ENCODE measurements at regions of chr6 and their contacts with region 1.

Region 1: DNA sequence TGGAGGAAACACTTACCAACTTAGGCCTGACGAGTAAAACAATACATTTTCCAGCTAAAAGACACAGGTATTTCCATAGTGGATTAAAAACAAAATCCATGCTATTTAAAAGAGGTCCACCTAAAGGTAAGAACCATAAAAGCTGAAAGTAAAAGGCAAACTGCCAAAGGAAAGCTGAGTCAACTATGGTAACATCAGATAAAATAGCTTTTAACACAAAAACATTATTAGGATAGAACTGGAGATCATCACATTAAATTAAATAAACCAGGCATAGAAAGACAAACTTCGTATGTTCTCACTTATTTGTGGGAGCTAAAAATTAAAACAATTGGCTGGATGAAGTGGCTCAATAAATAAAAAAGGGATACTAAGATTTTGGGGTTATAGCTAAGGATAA is 166.8 kb upstream of the SLC22A16 start:
- DNase-seq: no peak
- H3K4me3 ChIP-seq: no peak overlapping the region
- H3K27ac ChIP-seq: no peak overlapping the region
- H3K4me1 ChIP-seq: no peaks in the 10 kb centered on the region
- H3K27me3 ChIP-seq: no peaks in the 10 kb centered on the region
- CTCF ChIP-seq: no peak
- POLR2A ChIP-seq: no peak

Region 2: DNA sequence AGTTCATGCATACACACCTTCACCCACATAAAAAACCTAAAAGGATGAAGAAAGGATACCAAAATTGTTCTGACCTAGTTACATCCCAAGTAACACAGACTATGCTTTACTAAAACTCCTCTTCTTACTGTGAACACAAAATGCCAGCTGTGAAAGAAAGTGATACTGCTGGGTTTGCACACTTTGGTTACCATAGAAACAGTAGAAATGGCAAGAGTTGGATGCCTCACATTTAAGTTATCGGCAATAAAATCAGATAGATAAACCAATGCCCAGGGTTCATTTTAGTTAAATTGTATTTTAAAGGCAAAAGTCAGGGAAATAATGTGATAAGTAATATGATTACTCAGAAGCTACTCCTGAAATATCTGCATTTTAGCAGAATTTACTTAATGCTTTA is 10.2 kb after region 1 on chr6:
- CTCF ChIA-PET with region 1: interaction called, 10 read pairs
- POLR2A ChIA-PET with region 1: no interaction called
- dilution Hi-C with region 1: no loop called
- intact Hi-C with region 1: no loop called
- DNase-seq: no peak
- H3K4me3 ChIP-seq: no peak overlapping the region
- H3K27ac ChIP-seq: no peak overlapping the region
- H3K4me1 ChIP-seq: no peaks in the 10 kb centered on the region
- H3K27me3 ChIP-seq: no peaks in the 10 kb centered on the region
- CTCF ChIP-seq: no peak
- POLR2A ChIP-seq: no peak